HEK293 (cell line): ENCODE measurements at regions of chr13 and their contacts with region 1.

Region 1: GRCh38 chr13:79423801-79424642 is 18.0 kb upstream of the RBM26 start:
- H3K4me3 ChIP-seq: no peak overlapping the region
- H3K27ac ChIP-seq: no peak overlapping the region
- H3K4me1 ChIP-seq: no peaks in the 10 kb centered on the region
- CTCF ChIP-seq: no peak

Region 2: GRCh38 chr13:79413521-79413920 is 10.5 kb before region 1 on chr13:
- CTCF ChIA-PET with region 1: interaction called, 10 read pairs
- POLR2A ChIA-PET with region 1: no interaction called
- H3K4me3 ChIP-seq: no peak overlapping the region
- H3K27ac ChIP-seq: no peak overlapping the region
- H3K4me1 ChIP-seq: no peaks in the 10 kb centered on the region
- CTCF ChIP-seq: no peak

Region 3: GRCh38 chr13:79434556-79434955 is 10.5 kb after region 1 on chr13:
- CTCF ChIA-PET with region 1: interaction called, 11 read pairs
- POLR2A ChIA-PET with region 1: no interaction called
- H3K4me3 ChIP-seq: no peak overlapping the region
- H3K27ac ChIP-seq: no peak overlapping the region
- H3K4me1 ChIP-seq: no peaks in the 10 kb centered on the region
- CTCF ChIP-seq: no peak

Region 4: DNA sequence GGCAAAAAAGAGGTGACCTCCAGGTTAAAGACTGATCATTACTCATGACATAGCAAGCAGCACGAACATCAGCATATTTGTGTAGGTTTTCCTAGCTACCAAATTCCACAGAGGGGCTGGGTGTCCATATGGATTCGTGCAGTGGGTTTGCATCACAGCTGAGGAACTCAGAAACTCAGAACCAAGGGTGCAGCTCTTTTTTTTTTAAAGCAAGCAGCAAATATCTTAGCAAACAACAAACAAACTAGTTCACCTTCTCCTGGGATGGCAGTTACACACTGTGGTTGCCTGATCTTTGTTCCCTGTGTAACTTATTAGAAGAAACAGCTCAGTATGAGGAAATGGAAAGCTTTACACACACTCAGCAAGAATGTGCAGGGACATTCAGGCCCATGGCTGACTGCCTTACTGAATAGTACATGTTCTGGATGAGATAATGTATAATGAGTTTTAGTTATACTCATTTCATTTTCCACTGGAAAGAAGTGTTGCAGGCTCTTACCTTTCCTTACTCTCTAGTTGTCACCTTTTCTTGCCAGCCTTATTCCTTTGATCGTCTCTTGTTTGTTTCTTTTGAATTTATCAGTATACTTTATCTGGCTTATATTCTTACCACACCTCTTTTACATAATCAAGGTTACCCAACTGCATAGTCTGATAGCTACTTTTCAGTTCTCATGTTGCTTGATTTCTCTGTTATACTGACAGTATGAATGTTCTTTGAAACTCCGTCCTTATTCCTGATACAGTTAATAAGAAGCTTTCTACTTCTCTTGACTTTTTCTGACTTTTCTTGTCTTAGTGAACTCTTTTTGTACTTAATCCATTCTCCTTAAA is 61.2 kb after region 1 on chr13:
- CTCF ChIA-PET with region 1: interaction called, 16 read pairs
- POLR2A ChIA-PET with region 1: interaction called, 7 read pairs
- H3K4me3 ChIP-seq: no peak overlapping the region
- H3K27ac ChIP-seq: no peak overlapping the region
- H3K4me1 ChIP-seq: no peaks in the 10 kb centered on the region
- CTCF ChIP-seq: no peak

Region 5: DNA sequence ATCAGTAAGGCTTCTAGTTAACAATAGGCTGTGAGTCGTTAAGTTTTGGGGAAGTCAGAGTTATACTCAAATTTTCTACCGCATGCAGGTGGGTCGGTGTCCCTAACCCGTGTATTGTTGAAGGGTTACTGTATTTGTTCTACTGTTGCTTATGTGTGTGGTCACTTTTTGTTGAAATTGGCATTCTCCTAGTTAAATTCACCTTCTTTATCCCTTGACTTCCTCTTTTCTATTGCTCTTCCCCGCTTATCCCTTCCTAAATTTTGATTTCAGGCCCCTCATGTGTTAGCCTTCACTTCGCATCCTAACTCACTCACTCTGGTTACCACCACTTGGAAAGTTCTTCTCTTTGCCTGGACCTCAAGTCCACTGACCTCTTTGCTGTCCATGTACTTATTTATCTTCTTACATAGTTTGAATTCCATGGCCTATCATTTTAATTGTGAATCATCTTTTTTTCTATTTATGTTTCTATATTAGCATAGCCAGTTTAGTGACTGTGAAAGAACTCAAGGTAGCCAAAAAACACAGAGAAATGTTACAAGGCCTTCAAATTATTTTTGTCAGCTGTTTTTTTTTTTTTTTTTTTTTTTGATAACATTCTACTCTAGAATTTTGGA is 109.9 kb after region 1 on chr13:
- CTCF ChIA-PET with region 1: interaction called, 30 read pairs
- POLR2A ChIA-PET with region 1: no interaction called
- H3K4me3 ChIP-seq: no peak overlapping the region
- H3K27ac ChIP-seq: no peak overlapping the region
- H3K4me1 ChIP-seq: no peaks in the 10 kb centered on the region
- CTCF ChIP-seq: no peak

Region 6: DNA sequence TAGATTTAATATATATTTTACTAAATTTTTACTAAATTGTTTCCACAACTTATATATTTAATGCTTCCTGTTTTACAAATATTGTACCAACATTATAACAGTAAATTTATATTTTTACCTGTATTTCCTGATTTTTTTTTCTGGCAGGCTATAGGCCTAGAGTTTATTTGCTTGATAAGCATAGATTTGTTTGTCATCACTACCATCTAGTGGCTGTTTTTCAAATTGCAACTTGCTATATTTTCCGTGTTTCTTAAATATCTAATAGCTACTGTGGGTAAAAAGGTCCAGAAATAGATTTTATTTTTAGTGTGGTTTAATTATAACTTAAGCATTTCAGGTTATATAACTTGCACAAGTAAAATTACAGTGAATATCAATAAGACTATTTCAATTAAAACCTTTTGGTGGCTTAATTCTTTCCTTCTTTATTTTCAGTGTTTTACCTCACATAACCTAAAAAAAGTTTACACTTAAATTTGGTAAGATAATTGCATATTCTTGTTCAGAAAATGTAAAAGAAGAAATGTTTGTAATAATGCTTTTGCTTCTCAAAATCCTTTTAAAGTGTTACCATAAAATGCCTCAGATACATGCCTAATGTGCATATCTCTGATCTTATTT is 117.5 kb after region 1 on chr13:
- CTCF ChIA-PET with region 1: interaction called, 77 read pairs
- POLR2A ChIA-PET with region 1: interaction called, 3 read pairs
- H3K4me3 ChIP-seq: no peak overlapping the region
- H3K27ac ChIP-seq: no peak overlapping the region
- H3K4me1 ChIP-seq: no peaks in the 10 kb centered on the region
- CTCF ChIP-seq: 0 out of 2 replicates have a peak, but pooled peaks have one; percentile 20

Region 7: DNA sequence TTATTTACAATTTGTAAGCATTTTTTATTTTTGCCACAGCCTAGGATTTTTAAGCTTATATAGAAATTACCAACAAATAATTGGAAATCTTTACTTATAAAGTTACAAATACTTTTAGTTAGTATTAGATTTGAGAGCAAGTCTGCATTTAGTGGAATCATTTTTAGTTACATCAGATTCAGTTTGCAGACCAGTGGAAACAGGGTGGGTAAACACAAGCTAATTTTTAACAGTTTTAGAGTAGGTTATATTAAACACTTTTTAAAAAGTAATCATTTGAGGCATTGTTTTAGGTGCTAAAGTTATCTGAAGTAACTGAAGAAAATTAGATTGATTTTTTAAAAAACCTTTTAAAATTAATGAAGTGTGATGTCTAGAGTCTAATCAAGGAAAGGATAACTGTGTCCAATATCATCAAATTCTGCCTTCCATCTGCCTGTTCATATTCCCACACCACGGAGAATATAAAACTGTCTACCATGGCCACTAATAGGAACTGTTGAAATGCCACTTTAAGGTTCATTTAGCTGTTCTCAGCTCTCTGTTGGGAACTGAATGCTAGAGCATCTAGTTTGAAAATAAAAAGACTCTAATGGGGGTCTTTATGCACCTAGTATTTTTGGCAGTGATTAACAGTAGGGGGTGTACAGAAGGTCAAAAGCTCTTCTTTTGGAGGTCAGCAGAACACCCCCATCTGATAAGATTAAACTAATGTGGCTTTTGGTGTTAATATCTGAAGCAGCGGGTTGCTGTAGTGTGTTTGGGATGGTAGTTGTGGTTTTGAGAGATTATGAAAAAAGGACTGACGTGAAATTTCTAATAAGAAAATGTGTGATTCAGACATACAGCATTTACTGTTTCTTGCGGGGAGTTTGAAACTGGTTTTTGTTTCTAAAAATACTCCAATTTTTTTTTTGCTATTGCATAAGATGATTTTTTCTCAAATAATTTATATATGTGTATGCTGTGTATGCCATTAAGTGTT is 123.5 kb after region 1 on chr13:
- CTCF ChIA-PET with region 1: interaction called, 50 read pairs
- POLR2A ChIA-PET with region 1: no interaction called
- H3K4me3 ChIP-seq: no peak overlapping the region
- H3K27ac ChIP-seq: no peak overlapping the region
- H3K4me1 ChIP-seq: no peaks in the 10 kb centered on the region
- CTCF ChIP-seq: no peak

Region 8: GRCh38 chr13:79668201-79668752 is 244.3 kb after region 1 on chr13:
- CTCF ChIA-PET with region 1: no interaction called
- POLR2A ChIA-PET with region 1: no interaction called
- H3K4me3 ChIP-seq: no peak overlapping the region
- H3K27ac ChIP-seq: no peak overlapping the region
- H3K4me1 ChIP-seq: no peaks in the 10 kb centered on the region
- CTCF ChIP-seq: no peak